HepG2 (cell line): ENCODE measurements at regions of chr9 and their contacts with region 1.

Region 1: DNA sequence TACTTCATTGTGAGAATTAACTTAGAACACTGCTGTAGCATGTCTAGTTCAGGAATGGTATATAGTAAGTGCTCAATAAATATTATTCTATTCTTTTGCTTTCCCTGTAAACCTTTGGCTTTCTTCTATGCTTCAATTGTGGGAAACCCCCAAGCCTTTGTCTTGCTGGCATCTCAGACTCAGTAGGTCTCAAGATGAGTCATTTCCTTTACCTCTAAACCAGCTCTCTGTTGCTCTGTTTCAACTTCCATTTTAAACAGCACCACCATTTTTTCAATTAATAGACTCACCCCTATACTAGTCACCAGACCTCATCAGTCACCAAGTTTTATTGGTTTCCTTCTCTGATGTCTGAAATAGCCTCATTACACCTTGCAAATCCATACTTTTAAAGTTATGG is 43.5 kb downstream of the DMAC1 start:
- DNase-seq: no peak
- ATAC-seq: no peak
- H3K4me3 ChIP-seq: no peak overlapping the region
- H3K27ac ChIP-seq: no peak overlapping the region
- H3K4me1 ChIP-seq: no peaks in the 10 kb centered on the region
- H3K27me3 ChIP-seq: no peaks in the 10 kb centered on the region
- CTCF ChIP-seq: no peak
- EP300 ChIP-seq: no peak
- POLR2A ChIP-seq: no peak
- RAD21 ChIP-seq: no peak

Region 2: GRCh38 chr9:7862170-7862569 is 106.1 kb after region 1 on chr9:
- CTCF ChIA-PET with region 1: no interaction called
- POLR2A ChIA-PET with region 1: no interaction called
- in situ Hi-C with region 1: loop called (anchors 25 kb)
- intact Hi-C with region 1: no loop called
- DNase-seq: no peak
- ATAC-seq: no peak
- H3K4me3 ChIP-seq: no peak overlapping the region
- H3K27ac ChIP-seq: no peak overlapping the region
- H3K4me1 ChIP-seq: no peaks in the 10 kb centered on the region
- H3K27me3 ChIP-seq: no peaks in the 10 kb centered on the region
- CTCF ChIP-seq: no peak
- EP300 ChIP-seq: no peak
- POLR2A ChIP-seq: no peak
- RAD21 ChIP-seq: no peak